PC-3 (cell line): ENCODE measurements at regions of chr12 and their contacts with region 1.

Region 1: DNA sequence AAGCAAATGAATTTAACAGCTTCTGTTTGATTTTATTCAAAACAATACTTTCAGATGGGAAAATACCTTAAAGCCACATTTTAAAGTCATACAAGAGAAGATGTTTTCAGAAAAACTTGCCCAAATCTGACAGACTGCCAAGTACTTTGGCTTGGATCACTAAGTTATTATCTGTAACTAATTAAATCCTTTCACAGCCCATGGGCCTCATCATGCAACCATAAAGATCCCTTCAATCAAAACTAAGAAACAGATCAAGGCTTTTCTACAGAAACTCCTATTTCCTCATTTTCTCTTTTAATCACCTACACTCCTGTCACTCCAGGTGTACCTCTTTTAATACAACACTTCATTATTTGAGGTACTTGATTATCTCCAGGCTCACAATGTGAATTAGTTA is 28.1 kb downstream of the BLTP3B start:
- DNase-seq: no peak
- ATAC-seq: no peak
- H3K4me3 ChIP-seq: no peak overlapping the region
- H3K27ac ChIP-seq: no peak overlapping the region
- H3K4me1 ChIP-seq: no peaks in the 10 kb centered on the region
- H3K27me3 ChIP-seq: no peaks in the 10 kb centered on the region
- CTCF ChIP-seq: no peak

Region 2: GRCh38 chr12:99847954-99848353 is 266.6 kb before region 1 on chr12:
- CTCF ChIA-PET with region 1: no interaction called
- POLR2A ChIA-PET with region 1: no interaction called
- intact Hi-C with region 1: no loop called
- DNase-seq: no peak
- ATAC-seq: no peak
- H3K4me3 ChIP-seq: no peak overlapping the region
- H3K27ac ChIP-seq: no peak overlapping the region
- H3K4me1 ChIP-seq: no peaks in the 10 kb centered on the region
- H3K27me3 ChIP-seq: 0 out of 2 replicates have a peak, but pooled peaks cover 5% of the 10 kb centered on the region
- CTCF ChIP-seq: no peak

Region 3: GRCh38 chr12:100101000-100101399 is 13.6 kb before region 1 on chr12:
- CTCF ChIA-PET with region 1: no interaction called
- POLR2A ChIA-PET with region 1: interaction called, 12 read pairs
- intact Hi-C with region 1: no loop called
- DNase-seq: no peak
- ATAC-seq: no peak
- H3K4me3 ChIP-seq: no peak overlapping the region
- H3K27ac ChIP-seq: no peak overlapping the region
- H3K4me1 ChIP-seq: no peaks in the 10 kb centered on the region
- H3K27me3 ChIP-seq: no peaks in the 10 kb centered on the region
- CTCF ChIP-seq: no peak